ENCODE measurements at regions of chr18 and their contacts with region 1.

Region 1: DNA sequence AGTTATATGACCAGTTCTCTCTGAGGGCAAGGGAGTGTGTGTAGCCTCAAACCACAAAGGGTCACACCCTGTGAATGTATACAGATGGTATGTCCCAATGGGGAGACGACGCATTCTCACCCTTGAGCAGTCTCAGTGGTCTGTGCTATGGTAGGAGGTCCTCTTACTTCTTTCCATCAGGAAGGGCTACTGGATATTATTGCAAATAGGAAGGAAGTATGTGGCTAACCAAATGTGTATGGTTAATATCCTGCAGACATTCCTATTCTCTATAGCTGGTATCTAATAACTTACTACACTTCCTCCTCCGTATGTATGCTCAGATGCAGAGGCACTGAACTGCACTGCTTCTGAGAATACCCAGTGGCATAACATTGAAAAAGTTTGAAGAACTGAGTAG is 306.7 kb upstream of the CCDC68 start:
- DNase-seq: no peak
- H3K4me3 ChIP-seq: no peak overlapping the region
- H3K27ac ChIP-seq: peak overlapping the region; percentile 72
- H3K4me1 ChIP-seq: peaks cover 74% of the 10 kb centered on the region
- H3K27me3 ChIP-seq: no peaks in the 10 kb centered on the region
- CTCF ChIP-seq: no peak

Region 2: GRCh38 chr18:55322178-55322735 is 56.3 kb after region 1 on chr18:
- intact Hi-C with region 1: loop called (anchors 10 kb)
- DNase-seq: peak; percentile 87
- H3K4me3 ChIP-seq: peak overlapping the region; percentile 76
- H3K27ac ChIP-seq: peak overlapping the region; percentile 98
- H3K4me1 ChIP-seq: peaks cover 63% of the 10 kb centered on the region
- H3K27me3 ChIP-seq: no peaks in the 10 kb centered on the region
- CTCF ChIP-seq: peak; percentile 34